A549 (cell line): ENCODE measurements at regions of chr19 and their contacts with region 1.

Region 1: DNA sequence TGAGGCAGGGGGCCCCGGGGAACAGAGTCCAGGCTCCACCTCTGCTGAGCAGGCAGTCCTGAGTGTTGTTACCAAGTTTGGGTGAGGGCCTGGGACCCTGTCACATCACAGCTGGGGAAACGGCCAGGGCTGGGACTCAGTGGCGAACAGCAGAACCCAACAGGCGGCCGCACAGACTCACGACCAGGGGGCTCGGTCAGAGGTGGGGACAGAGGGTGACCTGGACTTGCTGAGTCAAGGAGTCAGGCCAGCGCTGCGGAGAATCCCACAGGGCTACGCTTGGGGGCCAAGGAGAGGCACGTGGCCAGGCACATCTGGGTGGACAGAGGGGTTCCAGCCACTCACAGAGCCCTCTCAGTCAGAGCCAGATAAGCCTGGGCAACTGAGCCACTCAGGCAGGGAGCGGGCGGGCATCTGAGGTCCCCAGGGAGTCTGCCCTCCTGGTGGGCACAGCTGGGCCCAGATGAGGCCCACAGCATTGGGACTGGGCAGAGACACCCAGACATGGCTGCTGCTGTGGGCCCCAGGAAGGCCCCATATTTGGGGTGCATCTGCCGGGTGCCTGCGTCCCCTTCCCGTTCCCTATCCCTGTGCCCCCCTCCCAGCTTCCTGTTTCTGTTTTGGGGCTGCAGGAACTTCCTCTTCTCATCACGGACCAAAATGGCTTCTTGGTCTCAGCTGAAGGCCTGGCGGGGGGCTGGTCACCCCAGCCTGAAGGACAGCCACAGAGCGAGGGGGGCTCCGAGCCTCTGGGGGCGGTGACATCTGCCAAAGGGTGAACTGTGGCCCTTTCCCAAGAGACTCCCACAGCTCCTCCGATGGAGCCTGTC is 34.0 kb downstream of the CEBPA start:
- DNase-seq: no peak
- ATAC-seq: peak in 1 of 2 experiments; percentile 4; a peak in 3 of 6 replicates
- H3K4me3 ChIP-seq: no peak overlapping the region
- H3K27ac ChIP-seq: no peak overlapping the region; a peak in 1 of 6 replicates
- H3K4me1 ChIP-seq: peaks cover under 1% of the 10 kb centered on the region; the same call in 1 of the 3 replicates
- CTCF ChIP-seq: no peak
- EP300 ChIP-seq: no peak
- POLR2A ChIP-seq: no peak
- RAD21 ChIP-seq: no peak

Region 2: DNA sequence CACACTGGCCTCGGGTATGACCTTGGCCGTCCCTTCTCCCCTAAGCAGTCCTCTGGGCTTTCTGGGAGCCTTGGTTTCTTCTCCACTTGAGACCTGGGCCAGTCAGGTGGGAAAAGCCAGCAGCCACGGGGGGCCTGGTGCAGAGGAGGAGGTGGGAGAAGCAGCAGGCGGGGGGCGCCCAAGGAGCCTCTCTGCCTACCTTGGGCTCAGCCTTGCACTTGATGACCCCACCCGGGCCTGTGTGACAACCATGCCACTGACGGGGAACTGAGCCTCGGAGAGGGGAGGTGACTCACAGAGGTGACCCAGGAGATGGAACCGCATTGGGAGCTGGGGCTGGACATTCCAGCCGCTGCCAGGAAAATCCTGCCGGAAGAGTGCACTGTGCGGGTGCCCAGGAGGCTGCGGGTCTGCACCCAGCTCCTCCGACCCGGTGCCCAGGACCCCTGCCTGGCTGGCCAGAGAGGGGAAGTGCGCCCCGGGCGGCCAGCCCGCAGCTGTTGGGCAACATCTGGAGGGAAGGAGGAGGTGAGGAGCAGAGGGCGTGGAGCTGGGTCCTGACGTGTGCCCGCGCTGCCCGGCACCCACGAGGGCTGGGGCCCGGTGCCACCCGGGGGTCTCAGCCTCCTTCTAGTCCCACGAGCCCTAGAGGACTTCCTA is 19.3 kb before region 1 on chr19:
- CTCF ChIA-PET with region 1: interaction called, 43 read pairs
- POLR2A ChIA-PET with region 1: interaction called, 3 read pairs
- DNase-seq: peak; percentile 63 to 90
- ATAC-seq: peak; percentile 72 to 79
- H3K4me3 ChIP-seq: 0 out of 3 replicates have a peak overlapping the region, but pooled peaks have one; percentile 18
- H3K27ac ChIP-seq: peak overlapping the region; percentile 36 to 75; a peak in 4 of 6 replicates
- H3K4me1 ChIP-seq: peaks cover 13% of the 10 kb centered on the region
- CTCF ChIP-seq: peak; percentile 48
- EP300 ChIP-seq: no peak
- POLR2A ChIP-seq: no peak
- RAD21 ChIP-seq: peak in 1 of 2 experiments; percentile 45; a peak in 3 of 5 replicates

Region 3: DNA sequence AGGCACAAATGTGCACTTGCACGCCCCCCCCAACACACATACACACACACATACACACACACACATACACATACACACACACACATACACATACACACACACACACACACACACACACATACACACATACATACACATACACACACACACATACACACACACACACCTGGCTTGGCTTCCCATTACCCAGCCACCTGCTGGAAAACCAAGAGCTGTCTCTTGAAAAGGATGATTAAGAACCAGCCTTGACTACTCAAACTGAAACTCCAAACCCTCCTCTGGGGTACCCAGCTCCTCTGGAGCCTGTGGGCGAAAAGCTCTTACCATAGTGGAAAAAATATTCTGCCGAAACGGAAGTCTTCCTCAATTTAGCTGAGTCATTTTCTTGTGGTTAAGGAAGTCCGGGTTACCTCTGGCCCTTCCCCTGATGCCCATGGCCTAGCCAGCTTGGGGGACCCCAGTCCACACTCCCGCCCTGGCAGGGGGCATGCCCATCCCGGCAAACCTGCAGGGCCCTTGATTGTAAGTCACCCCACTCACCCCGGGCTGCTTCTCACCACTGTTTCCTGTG is 12.1 kb after region 1 on chr19:
- CTCF ChIA-PET with region 1: interaction called, 34 read pairs
- POLR2A ChIA-PET with region 1: no interaction called
- DNase-seq: no peak
- ATAC-seq: no peak
- H3K4me3 ChIP-seq: no peak overlapping the region
- H3K27ac ChIP-seq: peak overlapping the region; percentile 40 to 70; a peak in 4 of 6 replicates
- H3K4me1 ChIP-seq: peaks cover 14% of the 10 kb centered on the region
- CTCF ChIP-seq: no peak
- EP300 ChIP-seq: no peak
- POLR2A ChIP-seq: no peak
- RAD21 ChIP-seq: no peak

Region 4: GRCh38 chr19:33317531-33317930 is 49.2 kb after region 1 on chr19:
- CTCF ChIA-PET with region 1: no interaction called
- POLR2A ChIA-PET with region 1: no interaction called
- DNase-seq: no peak
- ATAC-seq: no peak
- H3K4me3 ChIP-seq: no peak overlapping the region
- H3K27ac ChIP-seq: peak overlapping the region; percentile 39 to 68; a peak in 5 of 6 replicates
- H3K4me1 ChIP-seq: peaks cover 23% of the 10 kb centered on the region
- CTCF ChIP-seq: no peak
- EP300 ChIP-seq: no peak
- POLR2A ChIP-seq: no peak
- RAD21 ChIP-seq: no peak